CD8-positive, alpha-beta memory T cell (primary cell): ENCODE measurements at regions of chr1 and their contacts with region 1.

Region 1: GRCh38 chr1:109548321-109549267 is at the start of gene GNAI3:
- DNase-seq: peak; percentile 93 to 98 (median 95)
- H3K4me3 ChIP-seq: peak within 1 kb of the TSS; percentile 97
- H3K4me3 Mint-ChIP-seq: peak within 1 kb of the TSS; percentile 88 to 100 (median 98)
- H3K27ac ChIP-seq: peak within 1 kb of the TSS; percentile 98
- H3K27ac Mint-ChIP-seq: peak within 1 kb of the TSS; percentile 95 to 100 (median 99)
- H3K4me1 ChIP-seq: peaks cover 37% of the 10 kb centered on the region
- H3K4me1 Mint-ChIP-seq: peaks cover 58 to 69% (median 65%) of the 10 kb centered on the region in 3 donors
- H3K27me3 ChIP-seq: no peaks in the 10 kb centered on the region
- H3K27me3 Mint-ChIP-seq: no peaks in the 10 kb centered on the region
- total RNA-seq, gene GNAI3: 9.8 to 9.9 TPM

Region 2: GRCh38 chr1:109426278-109427170 is 122.1 kb before region 1 on chr1 and contains the start of gene PSMA5:
- CTCF ChIA-PET with region 1: interaction called, 6 read pairs
- POLR2A ChIA-PET with region 1: interaction called, 16 read pairs
- DNase-seq: peak; percentile 89 to 98 (median 94)
- H3K4me3 ChIP-seq: peak within 1 kb of the TSS; percentile 85
- H3K4me3 Mint-ChIP-seq: peak within 1 kb of the TSS; percentile 96 to 99 (median 98)
- H3K27ac ChIP-seq: peak within 1 kb of the TSS; percentile 94
- H3K27ac Mint-ChIP-seq: peak within 1 kb of the TSS; percentile 96 to 100 (median 99)
- H3K4me1 ChIP-seq: peaks cover 45% of the 10 kb centered on the region
- H3K4me1 Mint-ChIP-seq: peaks cover 35 to 47% (median 47%) of the 10 kb centered on the region in 3 donors
- H3K27me3 ChIP-seq: no peaks in the 10 kb centered on the region
- H3K27me3 Mint-ChIP-seq: no peaks in the 10 kb centered on the region
- total RNA-seq, gene PSMA5: 207 to 238 TPM

Region 3: GRCh38 chr1:109630081-109630897 is 81.7 kb after region 1 on chr1:
- CTCF ChIA-PET with region 1: interaction called, 51 read pairs
- POLR2A ChIA-PET with region 1: interaction called, 6 read pairs
- DNase-seq: peak in 2 of 5 donors; percentile 37 to 63
- H3K4me3 ChIP-seq: no peak overlapping the region
- H3K4me3 Mint-ChIP-seq: peak overlapping the region in 1 of 7 donors; percentile 70
- H3K27ac ChIP-seq: no peak overlapping the region
- H3K27ac Mint-ChIP-seq: peak overlapping the region in 4 of 8 donors; percentile 35 to 84 (median 58)
- H3K4me1 ChIP-seq: peaks cover 9% of the 10 kb centered on the region
- H3K4me1 Mint-ChIP-seq: peaks cover 7 to 12% (median 9%) of the 10 kb centered on the region in 3 donors
- H3K27me3 ChIP-seq: no peaks in the 10 kb centered on the region
- H3K27me3 Mint-ChIP-seq: no peaks in the 10 kb centered on the region

Region 4: GRCh38 chr1:109643385-109644230 is 95.0 kb after region 1 on chr1:
- CTCF ChIA-PET with region 1: interaction called, 55 read pairs
- POLR2A ChIA-PET with region 1: interaction called, 6 read pairs
- DNase-seq: peak; percentile 67 to 88 (median 74)
- H3K4me3 ChIP-seq: no peak overlapping the region
- H3K4me3 Mint-ChIP-seq: no peak overlapping the region
- H3K27ac ChIP-seq: no peak overlapping the region
- H3K27ac Mint-ChIP-seq: peak overlapping the region in 2 of 8 donors; percentile 29 to 54
- H3K4me1 ChIP-seq: peaks cover 4% of the 10 kb centered on the region
- H3K4me1 Mint-ChIP-seq: peaks cover 4 to 12% (median 7%) of the 10 kb centered on the region in 3 donors
- H3K27me3 ChIP-seq: no peaks in the 10 kb centered on the region
- H3K27me3 Mint-ChIP-seq: peaks cover 0 to 3% of the 10 kb centered on the region in 2 donors

Region 5: GRCh38 chr1:109773146-109773899 is 224.7 kb after region 1 on chr1:
- CTCF ChIA-PET with region 1: interaction called, 26 read pairs
- POLR2A ChIA-PET with region 1: no interaction called
- DNase-seq: peak; percentile 27 to 81 (median 61)
- H3K4me3 ChIP-seq: no peak overlapping the region
- H3K4me3 Mint-ChIP-seq: no peak overlapping the region
- H3K27ac ChIP-seq: no peak overlapping the region
- H3K27ac Mint-ChIP-seq: peak overlapping the region in 2 of 8 donors; percentile 6 to 33
- H3K4me1 ChIP-seq: peaks cover 4% of the 10 kb centered on the region
- H3K4me1 Mint-ChIP-seq: peaks cover 5 to 15% (median 5%) of the 10 kb centered on the region in 3 donors
- H3K27me3 ChIP-seq: no peaks in the 10 kb centered on the region
- H3K27me3 Mint-ChIP-seq: peaks cover 10 to 19% of the 10 kb centered on the region in 2 donors